K562 (cell line): ENCODE measurements at regions of chr1 and their contacts with region 1.

Region 1: GRCh38 chr1:45550401-45551351 is at the start of gene AKR1A1:
- DNase-seq: peak; percentile 90 to 97 (median 92)
- ATAC-seq: peak; percentile 98
- H3K4me3 ChIP-seq: peak within 1 kb of the TSS; percentile 72
- H3K27ac ChIP-seq: peak within 1 kb of the TSS; percentile 92
- H3K4me1 ChIP-seq: peaks cover 10 to 17% of the 10 kb centered on the region in 2 experiments; a peak in 3 of 5 replicates
- H3K27me3 ChIP-seq: no peaks in the 10 kb centered on the region; a peak in 1 of 5 replicates
- CTCF ChIP-seq: peak in 2 of 3 experiments; percentile 4 to 11; a peak in 1 of 6 replicates
- EP300 ChIP-seq: peak; percentile 21; the same call in 1 of the 2 replicates
- POLR2A ChIP-seq: peak; percentile 96
- RAD21 ChIP-seq: peak in 1 of 2 experiments; percentile 15; a peak in 1 of 4 replicates
- polyA plus RNA-seq, gene AKR1A1: 68.6 to 114 TPM

Region 2: GRCh38 chr1:45512641-45513054 is 38.0 kb before region 1 on chr1:
- CTCF ChIA-PET with region 1: no interaction called
- POLR2A ChIA-PET with region 1: interaction called, 13 read pairs
- in situ Hi-C with region 1: no loop called
- intact Hi-C with region 1: no loop called
- DNase-seq: peak; percentile 57 to 88 (median 67)
- ATAC-seq: peak; percentile 78
- H3K4me3 ChIP-seq: no peak overlapping the region
- H3K27ac ChIP-seq: no peak overlapping the region
- H3K4me1 ChIP-seq: no peaks in the 10 kb centered on the region; a peak in 1 of 5 replicates
- H3K27me3 ChIP-seq: no peaks in the 10 kb centered on the region
- CTCF ChIP-seq: peak; percentile 84 to 89 (median 86)
- EP300 ChIP-seq: no peak
- POLR2A ChIP-seq: no peak
- RAD21 ChIP-seq: peak; percentile 87 to 95

Region 3: GRCh38 chr1:45563843-45564242 is 13.2 kb after region 1 on chr1:
- CTCF ChIA-PET with region 1: no interaction called
- POLR2A ChIA-PET with region 1: interaction called, 15 read pairs
- in situ Hi-C with region 1: no loop called
- intact Hi-C with region 1: no loop called
- DNase-seq: no peak
- ATAC-seq: no peak
- H3K4me3 ChIP-seq: no peak overlapping the region
- H3K27ac ChIP-seq: no peak overlapping the region
- H3K4me1 ChIP-seq: peaks cover 3 to 7% of the 10 kb centered on the region in 2 experiments; a peak in 3 of 5 replicates
- H3K27me3 ChIP-seq: no peaks in the 10 kb centered on the region
- CTCF ChIP-seq: no peak
- EP300 ChIP-seq: no peak
- POLR2A ChIP-seq: no peak
- RAD21 ChIP-seq: no peak

Region 4: GRCh38 chr1:45569962-45570581 is 19.4 kb after region 1 on chr1:
- CTCF ChIA-PET with region 1: no interaction called
- POLR2A ChIA-PET with region 1: interaction called, 11 read pairs
- in situ Hi-C with region 1: no loop called
- intact Hi-C with region 1: no loop called
- DNase-seq: peak; percentile 67 to 86 (median 74)
- ATAC-seq: peak; percentile 87
- H3K4me3 ChIP-seq: no peak overlapping the region
- H3K27ac ChIP-seq: no peak overlapping the region
- H3K4me1 ChIP-seq: peaks cover 11 to 22% of the 10 kb centered on the region in 2 experiments
- H3K27me3 ChIP-seq: no peaks in the 10 kb centered on the region
- CTCF ChIP-seq: peak; percentile 95 to 99 (median 98)
- EP300 ChIP-seq: 0 out of 2 replicates have a peak, but pooled peaks have one; percentile 8
- POLR2A ChIP-seq: no peak
- RAD21 ChIP-seq: peak; percentile 94 to 97

Region 5: GRCh38 chr1:45643978-45644377 is 93.3 kb after region 1 on chr1:
- CTCF ChIA-PET with region 1: no interaction called
- POLR2A ChIA-PET with region 1: no interaction called
- in situ Hi-C with region 1: no loop called
- intact Hi-C with region 1: no loop called
- DNase-seq: no peak
- ATAC-seq: peak; percentile 43; the same call in 2 of the 3 replicates
- H3K4me3 ChIP-seq: no peak overlapping the region
- H3K27ac ChIP-seq: no peak overlapping the region
- H3K4me1 ChIP-seq: no peaks in the 10 kb centered on the region
- H3K27me3 ChIP-seq: no peaks in the 10 kb centered on the region
- CTCF ChIP-seq: peak in 1 of 3 experiments; percentile 16; a peak in 3 of 6 replicates
- EP300 ChIP-seq: no peak
- POLR2A ChIP-seq: no peak
- RAD21 ChIP-seq: peak in 1 of 2 experiments; percentile 34; a peak in 1 of 4 replicates

Region 6: DNA sequence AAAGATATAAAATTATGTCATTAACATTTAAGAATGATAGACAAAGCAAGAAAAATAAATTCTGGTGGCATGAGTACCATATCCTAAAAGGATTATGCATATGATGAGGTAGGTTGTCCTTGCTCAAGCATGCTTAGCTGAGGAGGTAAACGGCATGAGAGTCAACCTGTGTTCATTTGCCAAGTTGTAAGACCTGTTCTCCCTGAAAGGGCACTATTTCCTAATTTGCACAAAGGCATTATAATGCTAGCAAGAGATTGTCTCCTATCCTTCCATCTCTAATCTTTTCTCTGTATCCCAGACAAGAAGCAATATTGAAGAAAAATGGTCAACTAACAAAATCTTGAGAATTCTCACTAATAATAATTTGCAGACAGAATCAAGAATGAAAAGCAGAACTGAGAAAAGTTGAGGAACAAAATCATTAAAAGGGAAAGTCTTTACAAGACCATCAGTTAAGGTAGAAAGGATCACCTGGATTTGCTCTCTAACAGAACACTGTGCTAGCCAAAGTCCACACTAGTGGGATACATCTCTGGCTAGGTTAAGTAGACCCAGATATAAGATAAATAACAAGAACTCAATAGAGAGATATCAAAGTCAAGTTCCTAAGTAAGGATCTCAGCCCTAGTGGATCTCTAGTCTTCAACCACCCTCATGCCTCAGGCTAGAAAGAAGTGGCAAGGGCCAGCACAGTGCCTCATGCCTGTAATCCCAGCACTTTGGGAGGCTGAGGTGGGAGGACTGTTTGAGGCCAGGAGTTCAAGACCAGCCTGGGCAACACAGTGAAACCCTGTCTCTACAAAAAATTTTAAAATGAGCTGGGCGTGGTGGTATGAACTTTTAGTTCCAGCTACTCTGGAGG is 180.0 kb after region 1 on chr1:
- CTCF ChIA-PET with region 1: no interaction called
- POLR2A ChIA-PET with region 1: no interaction called
- in situ Hi-C with region 1: no loop called
- intact Hi-C with region 1: no loop called
- DNase-seq: no peak
- ATAC-seq: peak; percentile 33
- H3K4me3 ChIP-seq: no peak overlapping the region
- H3K27ac ChIP-seq: no peak overlapping the region
- H3K4me1 ChIP-seq: peaks cover 7 to 10% of the 10 kb centered on the region in 2 experiments; a peak in 4 of 5 replicates
- H3K27me3 ChIP-seq: no peaks in the 10 kb centered on the region
- CTCF ChIP-seq: no peak
- EP300 ChIP-seq: no peak
- POLR2A ChIP-seq: no peak
- RAD21 ChIP-seq: no peak